ENCODE measurements at regions of chrX and their contacts with region 1.

Region 1: DNA sequence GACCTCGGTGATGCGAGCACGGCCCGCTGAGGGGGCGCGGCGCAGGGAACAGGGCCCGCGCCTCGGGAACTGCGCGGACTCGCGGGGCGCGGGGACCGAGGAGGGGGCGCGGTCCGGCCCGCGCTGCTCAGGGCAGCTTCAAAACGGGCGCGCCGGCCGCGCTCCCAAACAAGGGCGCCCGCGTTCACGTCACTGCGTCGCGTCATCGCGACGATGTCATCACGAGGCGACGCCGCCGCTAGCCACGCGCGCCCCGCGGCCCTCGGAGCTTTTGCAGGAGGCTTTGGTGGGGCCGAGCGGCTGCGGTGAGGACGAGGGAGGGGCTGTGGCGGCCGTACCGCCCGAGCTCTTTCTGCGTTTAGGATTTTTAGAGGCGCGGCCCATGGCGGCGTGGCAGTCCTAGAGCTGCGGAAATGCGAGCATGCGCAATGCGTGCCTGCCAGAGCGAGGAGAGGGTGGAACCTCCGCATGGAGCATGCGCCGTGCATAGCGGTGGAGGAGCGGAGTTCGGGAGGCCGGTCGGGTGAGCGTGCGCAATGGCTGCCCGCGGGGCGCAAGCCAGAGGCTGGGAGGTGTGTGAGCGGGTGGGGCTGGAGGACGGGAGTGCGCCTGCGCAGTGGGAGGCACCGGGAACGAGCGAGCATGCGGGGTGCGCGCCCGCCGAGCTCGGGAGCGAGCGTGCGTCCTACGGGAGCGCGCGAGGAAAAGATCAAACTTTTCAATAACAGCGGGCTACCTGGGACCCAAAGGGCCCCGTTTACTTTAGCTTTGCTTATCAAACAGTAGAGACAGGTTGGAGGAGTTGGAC is at the start of gene PPP2R3B:
- DNase-seq: peak; percentile 99
- ATAC-seq: peak; percentile 99
- H3K4me3 Mint-ChIP-seq: peak within 1 kb of the TSS; percentile 88
- H3K27ac Mint-ChIP-seq: peak within 1 kb of the TSS; percentile 96
- H3K4me1 Mint-ChIP-seq: peaks cover 8% of the 10 kb centered on the region
- H3K27me3 Mint-ChIP-seq: no peaks in the 10 kb centered on the region
- total RNA-seq, gene PPP2R3B: 23.3 to 26.8 TPM

Region 2: DNA sequence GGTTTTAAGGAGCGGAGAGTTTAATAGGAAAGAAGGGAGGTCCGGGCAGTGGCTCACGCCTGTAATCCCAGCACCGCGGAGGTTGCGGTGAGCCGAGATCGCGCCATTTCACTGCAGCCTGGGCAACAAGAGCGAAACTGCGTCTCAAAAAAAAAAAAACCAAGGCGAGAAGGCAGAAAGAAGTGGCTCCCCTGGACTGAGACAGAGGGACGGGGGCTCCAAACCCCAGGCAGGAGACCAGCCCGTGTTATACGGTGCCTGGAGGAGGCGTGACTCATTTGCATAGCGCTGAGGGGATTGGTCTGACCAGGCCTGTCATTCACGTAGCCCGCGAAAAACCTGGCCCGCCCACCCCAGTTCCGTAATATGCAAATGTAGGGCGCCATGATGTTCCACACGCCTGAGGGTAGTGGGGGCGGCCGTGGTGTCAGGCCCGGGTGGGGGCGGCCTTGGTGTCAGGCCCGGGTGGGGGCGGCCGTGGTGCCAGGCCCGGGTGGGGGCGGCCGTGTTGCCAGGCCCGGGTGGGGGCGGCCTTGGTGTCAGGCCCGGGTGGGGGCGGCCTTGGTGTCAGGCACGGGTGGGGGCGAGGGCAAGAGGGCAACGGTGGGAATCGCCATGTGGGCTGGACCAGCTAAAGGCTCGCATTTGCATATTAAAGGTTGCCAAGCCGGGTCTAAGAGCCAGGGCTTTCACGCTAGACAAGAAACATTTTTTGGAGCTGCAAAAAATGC is 103.7 kb before region 1 on chrX:
- CTCF ChIA-PET with region 1: no interaction called
- POLR2A ChIA-PET with region 1: no interaction called
- intact Hi-C with region 1: loop called in 1 of 2 experiments (anchors 1 kb)
- DNase-seq: peak; percentile 96
- ATAC-seq: peak; percentile 96
- H3K4me3 Mint-ChIP-seq: peak overlapping the region; percentile 94
- H3K27ac Mint-ChIP-seq: peak overlapping the region; percentile 97
- H3K4me1 Mint-ChIP-seq: peaks cover 26% of the 10 kb centered on the region
- H3K27me3 Mint-ChIP-seq: no peaks in the 10 kb centered on the region

Region 3: GRCh38 chrX:357693-358471 is 29.1 kb before region 1 on chrX:
- CTCF ChIA-PET with region 1: no interaction called
- POLR2A ChIA-PET with region 1: no interaction called
- intact Hi-C with region 1: loop called in 1 of 2 experiments (anchors 1 kb)
- DNase-seq: peak; percentile 67
- ATAC-seq: peak; percentile 99
- H3K4me3 Mint-ChIP-seq: peak overlapping the region; percentile 15
- H3K27ac Mint-ChIP-seq: peak overlapping the region; percentile 94
- H3K4me1 Mint-ChIP-seq: peaks cover 17% of the 10 kb centered on the region
- H3K27me3 Mint-ChIP-seq: no peaks in the 10 kb centered on the region

Region 4: DNA sequence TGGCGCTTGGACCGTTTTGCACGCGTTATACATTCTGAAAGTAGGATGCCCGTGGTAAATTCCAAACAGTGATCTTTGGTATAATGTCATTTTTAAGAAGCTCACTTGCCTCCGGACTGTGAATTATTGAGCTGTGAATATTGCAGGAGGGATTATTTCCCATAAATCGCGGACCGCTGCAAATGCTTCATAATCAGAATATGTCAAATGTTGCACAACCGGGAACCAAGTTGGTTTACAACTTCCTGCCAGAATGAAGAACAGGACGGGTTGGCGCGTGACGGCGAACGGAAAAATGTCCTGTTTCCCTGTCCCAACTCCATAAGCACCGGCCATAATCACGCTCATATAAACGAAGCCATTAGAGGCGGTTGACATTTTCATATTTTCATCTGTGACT is 311.2 kb after region 1 on chrX:
- CTCF ChIA-PET with region 1: no interaction called
- POLR2A ChIA-PET with region 1: no interaction called
- intact Hi-C with region 1: no loop called
- DNase-seq: no peak
- ATAC-seq: no peak
- H3K4me3 Mint-ChIP-seq: no peak overlapping the region
- H3K27ac Mint-ChIP-seq: no peak overlapping the region
- H3K4me1 Mint-ChIP-seq: peaks cover 3% of the 10 kb centered on the region
- H3K27me3 Mint-ChIP-seq: peaks cover 9% of the 10 kb centered on the region

Region 5: DNA sequence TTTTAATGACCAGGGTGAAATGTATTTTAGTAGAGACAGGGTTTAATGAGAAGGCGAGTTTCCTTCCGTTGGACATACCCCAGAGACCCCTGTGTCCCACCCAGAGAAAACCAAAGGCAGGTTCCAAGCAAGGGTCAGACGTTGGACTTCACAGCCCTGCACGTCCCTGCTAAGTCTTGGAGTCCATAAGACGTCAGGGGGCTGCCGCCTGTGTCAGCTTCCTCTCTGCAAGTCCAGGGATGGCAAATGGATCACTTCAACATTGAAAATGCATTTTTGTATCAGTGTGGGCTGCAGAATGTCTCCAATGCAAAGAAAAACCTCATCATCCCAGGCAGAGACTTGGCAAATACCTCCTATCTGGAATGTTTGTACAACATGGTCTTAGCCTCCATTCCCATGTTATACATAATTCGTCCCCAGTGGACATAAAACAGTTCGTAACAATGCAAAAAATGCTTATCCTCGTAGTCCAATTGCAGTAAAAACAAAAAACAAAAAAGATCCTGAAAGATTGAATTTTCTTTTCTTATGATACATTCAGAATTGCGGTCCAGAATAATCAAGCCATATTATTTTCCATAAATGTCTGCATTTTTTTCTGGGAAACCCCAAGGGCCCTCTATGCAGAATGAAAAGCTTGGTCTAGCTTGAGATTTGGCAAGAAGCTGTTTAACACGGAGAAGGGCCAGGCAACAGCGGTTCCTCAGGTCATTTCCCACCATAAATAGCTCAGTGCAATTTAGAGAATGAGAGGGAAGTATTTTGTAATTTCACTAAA is 434.5 kb after region 1 on chrX:
- CTCF ChIA-PET with region 1: no interaction called
- POLR2A ChIA-PET with region 1: no interaction called
- intact Hi-C with region 1: no loop called
- DNase-seq: no peak
- ATAC-seq: no peak
- H3K4me3 Mint-ChIP-seq: no peak overlapping the region
- H3K27ac Mint-ChIP-seq: no peak overlapping the region
- H3K4me1 Mint-ChIP-seq: no peaks in the 10 kb centered on the region
- H3K27me3 Mint-ChIP-seq: no peaks in the 10 kb centered on the region

Region 6: DNA sequence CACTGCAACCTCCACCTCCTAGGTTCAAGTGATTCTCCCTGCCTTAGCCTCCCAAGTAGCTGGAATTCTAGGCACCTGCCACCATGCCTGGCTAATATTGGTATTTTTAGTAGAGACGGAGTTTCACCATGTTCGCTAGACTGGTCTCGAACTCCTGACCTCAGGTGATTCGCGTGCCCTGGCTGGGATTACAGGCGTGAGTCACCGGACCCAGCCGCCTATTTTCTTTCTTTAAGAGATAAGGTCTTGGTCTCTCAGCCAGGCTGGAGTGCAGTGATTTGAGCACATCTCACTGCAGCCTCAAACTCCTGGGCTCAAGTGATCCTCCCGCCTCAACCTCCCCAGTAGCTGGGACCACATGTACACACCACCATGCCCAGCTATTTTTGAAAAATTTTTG is 1947.3 kb after region 1 on chrX:
- CTCF ChIA-PET with region 1: no interaction called
- POLR2A ChIA-PET with region 1: no interaction called
- intact Hi-C with region 1: no loop called
- DNase-seq: no peak
- ATAC-seq: no peak
- H3K4me3 Mint-ChIP-seq: no peak overlapping the region
- H3K27ac Mint-ChIP-seq: no peak overlapping the region
- H3K4me1 Mint-ChIP-seq: no peaks in the 10 kb centered on the region
- H3K27me3 Mint-ChIP-seq: no peaks in the 10 kb centered on the region

Measured in activated CD4-positive, alpha-beta T cell treated with anti-CD3 and anti-CD28 coated beads for 36 hours (primary cell).